Activated CD4-positive, alpha-beta T cell treated with anti-CD3 and anti-CD28 coated beads, Interleukin-2, amount 10 ng/mL, durations not matched to agents 24 days and 14 days (primary cell): ENCODE measurements at regions of chr4 and their contacts with region 1.

Region 1: DNA sequence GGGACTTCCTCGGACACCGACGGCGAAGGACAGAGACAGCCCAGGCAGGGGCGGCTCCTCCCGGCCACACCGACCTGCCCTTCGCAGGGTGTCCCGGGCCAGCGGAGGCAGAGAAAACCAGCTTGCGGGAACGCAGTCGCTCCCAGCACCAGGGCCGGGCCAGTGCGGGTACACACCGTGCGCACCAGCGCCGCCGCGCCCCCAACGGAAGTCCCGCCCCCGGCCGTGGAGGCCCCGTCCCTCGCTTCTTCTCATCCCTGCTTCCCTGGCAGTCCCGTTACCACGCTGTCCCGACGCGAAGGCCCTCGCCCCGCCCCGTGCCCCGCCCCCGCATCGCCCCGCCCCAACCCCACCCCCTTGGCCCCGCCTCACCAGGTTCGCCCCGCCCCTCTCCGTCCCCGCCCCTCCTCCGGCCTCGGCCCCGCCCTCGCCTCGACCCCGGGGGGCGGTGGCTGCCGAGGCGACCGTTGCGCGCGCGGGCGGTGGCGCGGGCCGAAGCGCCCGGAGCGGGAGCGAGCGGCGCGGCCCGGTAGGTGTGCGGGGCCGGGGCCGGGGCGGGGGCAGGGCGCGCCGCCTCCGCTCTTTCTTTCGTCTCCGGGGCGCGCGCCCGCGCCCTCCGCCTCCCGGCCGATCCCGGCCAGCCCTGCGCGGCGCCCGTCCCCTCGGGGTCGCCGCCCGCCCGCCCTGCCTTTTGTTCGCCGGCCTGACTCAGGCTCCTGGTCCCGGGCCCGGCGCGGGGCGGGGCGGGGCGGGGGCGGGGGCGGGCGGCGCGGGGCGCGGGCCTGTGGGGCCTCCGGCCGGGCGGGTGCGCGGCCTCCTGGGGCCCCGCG is at the start of gene RGS12:
- DNase-seq: peak; percentile 95
- H3K4me3 Mint-ChIP-seq: peak within 1 kb of the TSS; percentile 91
- H3K27ac Mint-ChIP-seq: peak within 1 kb of the TSS; percentile 77
- H3K4me1 Mint-ChIP-seq: peaks cover 13% of the 10 kb centered on the region
- H3K27me3 Mint-ChIP-seq: peaks cover 64% of the 10 kb centered on the region
- total RNA-seq, gene RGS12: 3.3 and 3.7 TPM in 2 replicates

Region 2: GRCh38 chr4:3201718-3202702 is 90.8 kb before region 1 on chr4:
- intact Hi-C with region 1: loop called (anchors 2 kb)
- DNase-seq: peak; percentile 94
- H3K4me3 Mint-ChIP-seq: peak overlapping the region; percentile 47
- H3K27ac Mint-ChIP-seq: peak overlapping the region; percentile 96
- H3K4me1 Mint-ChIP-seq: peaks cover 37% of the 10 kb centered on the region
- H3K27me3 Mint-ChIP-seq: no peaks in the 10 kb centered on the region

Region 3: GRCh38 chr4:3215261-3215660 is 77.5 kb before region 1 on chr4:
- intact Hi-C with region 1: no loop called
- DNase-seq: no peak
- H3K4me3 Mint-ChIP-seq: no peak overlapping the region
- H3K27ac Mint-ChIP-seq: no peak overlapping the region
- H3K4me1 Mint-ChIP-seq: peaks cover 4% of the 10 kb centered on the region
- H3K27me3 Mint-ChIP-seq: no peaks in the 10 kb centered on the region

Region 4: GRCh38 chr4:3531879-3532713 is 239.3 kb after region 1 on chr4 and contains the start of gene LRPAP1:
- intact Hi-C with region 1: loop called (anchors 5 kb)
- DNase-seq: peak; percentile 96
- H3K4me3 Mint-ChIP-seq: peak within 1 kb of the TSS; percentile 100
- H3K27ac Mint-ChIP-seq: peak within 1 kb of the TSS; percentile 97
- H3K4me1 Mint-ChIP-seq: peaks cover 21% of the 10 kb centered on the region
- H3K27me3 Mint-ChIP-seq: peaks cover 15% of the 10 kb centered on the region
- total RNA-seq, gene LRPAP1: 76.1 and 81.6 TPM in 2 replicates